ENCODE measurements at regions of chr4 and their contacts with region 1.

Region 1: GRCh38 chr4:185061610-185062009 is 43.3 kb downstream of the HELT start:
- DNase-seq: no peak
- ATAC-seq: no peak
- H3K4me3 ChIP-seq: no peak overlapping the region
- H3K27ac ChIP-seq: no peak overlapping the region
- H3K4me1 ChIP-seq: no peaks in the 10 kb centered on the region
- H3K27me3 ChIP-seq: no peaks in the 10 kb centered on the region
- CTCF ChIP-seq: no peak
- POLR2A ChIP-seq: no peak

Region 2: DNA sequence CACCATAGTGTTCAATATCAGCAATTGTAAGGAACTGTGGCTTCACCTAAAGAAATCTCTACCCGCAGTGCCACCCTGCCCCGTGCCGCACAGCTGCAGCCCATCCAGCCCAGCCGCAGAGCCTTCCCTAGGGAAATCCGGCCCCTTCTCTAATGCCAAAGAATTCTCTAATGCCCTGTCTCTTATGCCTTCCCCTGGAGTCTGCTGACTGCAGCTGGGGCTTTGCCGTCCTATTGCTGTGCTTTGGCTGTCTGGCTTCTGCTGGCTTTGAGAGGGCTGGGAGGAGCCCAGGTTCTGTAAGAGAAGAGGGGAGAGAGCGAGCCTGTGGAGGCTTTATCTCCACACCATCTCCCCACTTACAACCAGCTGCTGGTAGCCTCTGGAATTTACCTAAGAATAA is 129.3 kb before region 1 on chr4:
- in situ Hi-C with region 1: no loop called
- intact Hi-C with region 1: no loop called
- DNase-seq: no peak
- ATAC-seq: no peak
- H3K4me3 ChIP-seq: no peak overlapping the region
- H3K27ac ChIP-seq: no peak overlapping the region
- H3K4me1 ChIP-seq: peaks cover 3 to 5% of the 10 kb centered on the region in 2 donors
- H3K27me3 ChIP-seq: no peaks in the 10 kb centered on the region
- CTCF ChIP-seq: no peak
- POLR2A ChIP-seq: no peak

Region 3: GRCh38 chr4:185005216-185005819 is 56.3 kb before region 1 on chr4:
- in situ Hi-C with region 1: no loop called
- intact Hi-C with region 1: no loop called
- DNase-seq: peak; percentile 59 to 69
- ATAC-seq: peak; percentile 94 to 97
- H3K4me3 ChIP-seq: peak overlapping the region; percentile 5 to 38 (median 20)
- H3K27ac ChIP-seq: no peak overlapping the region
- H3K4me1 ChIP-seq: peaks cover 0 to 11% of the 10 kb centered on the region in 2 donors
- H3K27me3 ChIP-seq: peaks cover 0 to 6% (median 5%) of the 10 kb centered on the region in 3 donors
- CTCF ChIP-seq: peak; percentile 71 to 95 (median 82)
- POLR2A ChIP-seq: no peak

Region 4: DNA sequence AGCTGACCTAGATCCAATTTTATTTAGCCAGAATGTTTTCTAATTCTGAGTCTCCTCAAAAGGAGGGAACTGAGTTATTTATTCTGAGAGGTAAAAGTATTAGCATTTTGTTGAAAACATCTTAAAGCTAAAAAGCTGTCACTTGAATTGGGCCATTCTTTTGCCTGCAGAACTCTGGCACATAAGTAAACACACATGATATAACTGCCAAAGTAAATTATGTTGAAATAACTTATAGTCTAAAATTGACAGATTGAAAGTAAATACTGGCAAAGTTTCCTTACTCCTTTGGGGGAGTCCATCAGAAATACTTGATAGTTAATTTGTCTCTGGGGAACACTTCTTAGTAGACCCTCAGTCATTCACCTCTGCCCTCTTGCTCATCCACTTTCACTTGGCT is 43.1 kb after region 1 on chr4:
- in situ Hi-C with region 1: no loop called
- intact Hi-C with region 1: loop called (anchors 1 kb)
- DNase-seq: no peak
- ATAC-seq: no peak
- H3K4me3 ChIP-seq: no peak overlapping the region
- H3K27ac ChIP-seq: no peak overlapping the region
- H3K4me1 ChIP-seq: no peaks in the 10 kb centered on the region
- H3K27me3 ChIP-seq: no peaks in the 10 kb centered on the region
- CTCF ChIP-seq: no peak
- POLR2A ChIP-seq: no peak

Region 5: DNA sequence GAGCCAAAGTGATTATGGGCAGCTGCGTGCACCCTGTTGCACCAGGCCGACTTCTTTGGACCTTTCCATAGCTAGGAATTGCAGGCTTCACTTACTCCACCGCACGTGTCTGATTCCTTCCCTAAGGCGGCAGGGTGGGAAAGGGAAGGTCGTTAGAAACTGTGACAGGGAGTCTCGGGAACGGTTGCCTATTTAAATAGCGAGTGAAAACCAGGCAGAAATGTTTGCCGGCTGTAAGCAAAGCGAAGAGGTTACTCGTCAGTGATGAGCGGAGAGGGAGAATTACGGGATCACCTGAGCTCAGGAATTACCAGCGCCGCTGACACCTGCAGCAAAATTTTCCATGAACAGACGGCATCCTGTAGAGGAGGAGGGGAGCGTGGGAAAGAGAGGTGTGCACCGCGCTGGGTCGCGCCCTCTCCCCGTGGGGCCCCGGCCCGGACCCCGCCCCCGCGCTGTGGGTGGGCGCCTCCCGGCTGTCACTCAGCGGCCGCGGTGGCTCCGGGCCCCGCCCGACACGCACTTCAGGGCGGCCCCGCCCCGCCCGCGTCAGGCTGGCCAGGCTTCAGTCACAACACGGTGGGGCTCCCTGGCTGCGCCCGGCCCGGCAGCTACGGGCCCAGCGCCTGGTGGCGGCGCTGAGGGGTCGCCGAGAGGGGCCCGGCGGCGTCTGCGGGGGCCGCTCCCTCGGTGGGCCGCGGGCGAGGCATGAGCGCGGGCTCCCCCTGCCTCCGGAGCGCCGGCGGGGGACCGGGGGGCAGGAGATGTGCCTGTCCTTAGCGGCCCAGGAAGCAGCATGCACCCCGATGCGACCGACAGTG is 147.6 kb after region 1 on chr4 and contains the start of gene SNX25:
- in situ Hi-C with region 1: no loop called
- intact Hi-C with region 1: no loop called
- DNase-seq: peak; percentile 69 to 80
- ATAC-seq: peak; percentile 86 to 89
- H3K4me3 ChIP-seq: peak within 1 kb of the TSS; percentile 56 to 80 (median 68)
- H3K27ac ChIP-seq: peak within 1 kb of the TSS; percentile 75 to 90 (median 82)
- H3K4me1 ChIP-seq: peaks cover 20 to 25% of the 10 kb centered on the region in 2 donors
- H3K27me3 ChIP-seq: no peaks in the 10 kb centered on the region
- CTCF ChIP-seq: peak in 4 of 5 experiments; percentile 13 to 54 (median 34)
- POLR2A ChIP-seq: peak; percentile 94 to 97
- total RNA-seq, gene SNX25: 11.3 to 17.3 (median 13.4) TPM